ENCODE measurements at regions of chr11 and their contacts with region 1.

Region 1: GRCh38 chr11:662689-663274 is 25.7 kb downstream of the DRD4 start:
- DNase-seq: peak; percentile 47
- ATAC-seq: peak; percentile 90
- H3K4me3 ChIP-seq: no peak overlapping the region
- H3K27ac ChIP-seq: no peak overlapping the region
- H3K4me1 ChIP-seq: peaks cover 5% of the 10 kb centered on the region; the same call in 1 of the 2 replicates
- H3K27me3 ChIP-seq: no peaks in the 10 kb centered on the region
- CTCF ChIP-seq: peak; percentile 71
- POLR2A ChIP-seq: no peak
- RAD21 ChIP-seq: peak; percentile 76

Region 2: DNA sequence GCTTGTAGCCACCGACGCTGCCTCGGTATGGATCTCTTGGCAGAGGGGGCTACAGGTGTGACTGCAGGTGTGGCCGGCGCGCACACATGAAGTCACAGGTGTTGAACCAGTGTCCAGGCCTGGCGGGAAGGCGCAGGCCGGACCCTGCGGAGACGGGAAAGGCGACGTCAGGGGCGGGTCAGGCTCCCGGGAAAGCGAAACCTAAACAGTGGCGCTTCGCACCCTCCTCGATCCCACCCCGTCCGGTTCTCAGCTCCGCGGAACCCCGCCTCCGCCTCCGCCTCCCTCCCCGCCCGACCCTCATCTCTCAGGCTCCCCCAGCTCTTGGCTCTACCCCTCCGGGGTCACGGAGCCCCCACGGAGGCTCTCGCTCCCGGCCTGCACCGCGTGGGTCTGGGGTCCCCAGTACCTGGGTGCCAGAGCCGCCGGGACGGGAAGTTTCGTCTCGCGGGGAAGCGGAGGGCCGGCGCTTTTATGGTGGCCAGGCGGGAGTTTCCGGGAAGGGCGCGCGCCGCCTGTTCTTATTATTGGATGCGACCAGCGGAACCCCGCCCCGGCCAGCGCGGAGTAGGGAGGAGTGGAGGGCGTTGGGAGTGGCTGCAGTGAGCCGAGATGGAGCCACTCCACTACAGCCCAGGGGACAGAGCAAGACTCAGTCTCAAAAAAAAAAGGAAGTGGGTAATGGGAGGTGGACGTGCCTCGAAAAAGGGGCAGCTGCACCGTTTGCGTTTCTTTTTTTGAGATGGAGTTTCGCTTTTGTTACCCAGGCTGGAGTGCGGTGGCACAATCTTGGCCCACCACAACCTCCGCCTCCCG is 47.1 kb before region 1 on chr11 and contains the start of gene IRF7:
- CTCF ChIA-PET with region 1: no interaction called
- POLR2A ChIA-PET with region 1: no interaction called
- dilution Hi-C with region 1: no loop called
- in situ Hi-C with region 1: no loop called
- intact Hi-C with region 1: no loop called
- DNase-seq: peak; percentile 80
- ATAC-seq: peak; percentile 96
- H3K4me3 ChIP-seq: peak within 1 kb of the TSS; percentile 91
- H3K27ac ChIP-seq: peak within 1 kb of the TSS; percentile 96
- H3K4me1 ChIP-seq: peaks cover 4% of the 10 kb centered on the region; the same call in 1 of the 2 replicates
- H3K27me3 ChIP-seq: no peaks in the 10 kb centered on the region
- CTCF ChIP-seq: no peak
- POLR2A ChIP-seq: peak; percentile 82
- RAD21 ChIP-seq: no peak
- total RNA-seq, gene IRF7: 1.4 and 1.6 TPM in 2 replicates

Region 3: GRCh38 chr11:629237-629583 is 33.6 kb before region 1 on chr11:
- CTCF ChIA-PET with region 1: no interaction called
- POLR2A ChIA-PET with region 1: no interaction called
- dilution Hi-C with region 1: no loop called
- in situ Hi-C with region 1: no loop called
- intact Hi-C with region 1: no loop called
- DNase-seq: no peak
- ATAC-seq: no peak
- H3K4me3 ChIP-seq: no peak overlapping the region
- H3K27ac ChIP-seq: no peak overlapping the region
- H3K4me1 ChIP-seq: peaks cover 4% of the 10 kb centered on the region; the same call in 1 of the 2 replicates
- H3K27me3 ChIP-seq: peaks cover 2% of the 10 kb centered on the region; the same call in 1 of the 2 replicates
- CTCF ChIP-seq: no peak
- POLR2A ChIP-seq: no peak
- RAD21 ChIP-seq: no peak

Region 4: GRCh38 chr11:695538-696248 is 32.9 kb after region 1 on chr11 and contains the start of gene TMEM80:
- CTCF ChIA-PET with region 1: no interaction called
- POLR2A ChIA-PET with region 1: no interaction called
- dilution Hi-C with region 1: no loop called
- in situ Hi-C with region 1: no loop called
- intact Hi-C with region 1: no loop called
- DNase-seq: peak; percentile 96
- ATAC-seq: peak; percentile 82
- H3K4me3 ChIP-seq: peak within 1 kb of the TSS; percentile 90
- H3K27ac ChIP-seq: peak within 1 kb of the TSS; percentile 99
- H3K4me1 ChIP-seq: peaks cover 36% of the 10 kb centered on the region
- H3K27me3 ChIP-seq: no peaks in the 10 kb centered on the region
- CTCF ChIP-seq: no peak
- POLR2A ChIP-seq: peak; percentile 68
- RAD21 ChIP-seq: no peak
- total RNA-seq, gene TMEM80: 5.0 and 5.6 TPM in 2 replicates

Region 5: GRCh38 chr11:727859-728748 is 65.3 kb after region 1 on chr11:
- CTCF ChIA-PET with region 1: no interaction called
- POLR2A ChIA-PET with region 1: no interaction called
- dilution Hi-C with region 1: no loop called
- in situ Hi-C with region 1: no loop called
- intact Hi-C with region 1: loop called (anchors 1 kb)
- DNase-seq: peak; percentile 72
- ATAC-seq: peak; percentile 81
- H3K4me3 ChIP-seq: no peak overlapping the region
- H3K27ac ChIP-seq: no peak overlapping the region
- H3K4me1 ChIP-seq: peaks cover 6% of the 10 kb centered on the region
- H3K27me3 ChIP-seq: peaks cover 10% of the 10 kb centered on the region; the same call in 1 of the 2 replicates
- CTCF ChIP-seq: peak; percentile 99
- POLR2A ChIP-seq: no peak
- RAD21 ChIP-seq: peak; percentile 62

Region 6: GRCh38 chr11:737371-737770 is 74.6 kb after region 1 on chr11:
- CTCF ChIA-PET with region 1: no interaction called
- POLR2A ChIA-PET with region 1: no interaction called
- dilution Hi-C with region 1: no loop called
- in situ Hi-C with region 1: loop called (anchors 5 kb)
- intact Hi-C with region 1: no loop called
- DNase-seq: no peak
- ATAC-seq: peak; percentile 35; the same call in 1 of the 2 replicates
- H3K4me3 ChIP-seq: no peak overlapping the region
- H3K27ac ChIP-seq: no peak overlapping the region
- H3K4me1 ChIP-seq: 0 out of 2 replicates have a peak, but pooled peaks cover 1% of the 10 kb centered on the region
- H3K27me3 ChIP-seq: peaks cover 15% of the 10 kb centered on the region; the same call in 1 of the 2 replicates
- CTCF ChIP-seq: no peak
- POLR2A ChIP-seq: no peak
- RAD21 ChIP-seq: no peak

Region 7: GRCh38 chr11:783581-784015 is 120.8 kb after region 1 on chr11:
- CTCF ChIA-PET with region 1: no interaction called
- POLR2A ChIA-PET with region 1: no interaction called
- dilution Hi-C with region 1: no loop called
- in situ Hi-C with region 1: no loop called
- intact Hi-C with region 1: loop called (anchors 1 kb)
- DNase-seq: peak; percentile 96
- ATAC-seq: peak; percentile 91
- H3K4me3 ChIP-seq: no peak overlapping the region
- H3K27ac ChIP-seq: peak overlapping the region; percentile 46; the same call in 1 of the 2 replicates
- H3K4me1 ChIP-seq: peaks cover 6% of the 10 kb centered on the region
- H3K27me3 ChIP-seq: no peaks in the 10 kb centered on the region
- CTCF ChIP-seq: peak; percentile 86
- POLR2A ChIP-seq: no peak
- RAD21 ChIP-seq: peak; percentile 73

Region 8: DNA sequence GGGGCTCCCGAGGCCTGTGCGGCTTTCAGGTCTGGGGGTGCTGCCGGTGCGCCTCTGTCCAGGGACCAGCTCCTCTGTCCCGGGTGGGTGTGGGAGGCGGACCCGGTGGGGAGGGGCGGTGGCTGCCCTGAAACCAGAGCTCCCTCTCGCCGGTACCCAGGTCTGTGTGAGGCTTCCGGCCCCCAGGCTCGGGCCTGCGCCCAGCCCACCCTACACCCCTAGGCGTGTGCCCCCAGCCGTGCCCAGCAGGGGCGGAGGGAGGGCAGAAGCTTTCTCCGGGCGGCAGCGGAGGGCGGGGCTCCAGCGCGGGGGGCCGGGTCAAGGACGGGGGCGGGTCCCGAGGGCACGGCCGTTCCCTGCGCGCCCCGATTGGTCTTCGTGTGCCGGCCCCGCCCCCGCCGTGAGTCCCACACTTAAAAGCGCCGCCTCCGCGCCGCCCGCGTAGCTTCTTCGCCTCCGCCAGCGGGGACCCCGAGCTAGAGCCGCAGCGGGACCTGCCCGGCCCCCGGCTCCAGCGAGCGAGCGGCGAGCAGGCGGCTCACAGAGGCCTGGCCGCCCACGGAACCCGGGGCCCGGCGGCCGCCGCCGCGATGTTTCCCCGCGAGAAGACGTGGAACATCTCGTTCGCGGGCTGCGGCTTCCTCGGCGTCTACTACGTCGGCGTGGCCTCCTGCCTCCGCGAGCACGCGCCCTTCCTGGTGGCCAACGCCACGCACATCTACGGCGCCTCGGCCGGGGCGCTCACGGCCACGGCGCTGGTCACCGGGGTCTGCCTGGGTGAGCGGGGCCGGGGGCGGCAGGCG is 156.5 kb after region 1 on chr11:
- CTCF ChIA-PET with region 1: no interaction called
- POLR2A ChIA-PET with region 1: interaction called, 13 read pairs
- dilution Hi-C with region 1: no loop called
- in situ Hi-C with region 1: no loop called
- intact Hi-C with region 1: no loop called
- DNase-seq: peak; percentile 73
- ATAC-seq: peak; percentile 90
- H3K4me3 ChIP-seq: peak overlapping the region; percentile 87
- H3K27ac ChIP-seq: peak overlapping the region; percentile 67
- H3K4me1 ChIP-seq: peaks cover 21% of the 10 kb centered on the region
- H3K27me3 ChIP-seq: no peaks in the 10 kb centered on the region
- CTCF ChIP-seq: 0 out of 2 replicates have a peak, but pooled peaks have one; percentile 9
- POLR2A ChIP-seq: peak; percentile 96
- RAD21 ChIP-seq: no peak

Measured in IMR-90 (cell line).